ENCODE measurements at regions of chr9 and their contacts with region 1.

Region 1: GRCh38 chr9:133979273-133979920 is 12.7 kb downstream of the VAV2 start:
- DNase-seq: peak; percentile 80
- ATAC-seq: peak; percentile 81
- H3K4me3 ChIP-seq: peak overlapping the region; percentile 48 to 73 (median 48)
- H3K27ac ChIP-seq: peak overlapping the region; percentile 92
- H3K4me1 ChIP-seq: peaks cover 78% of the 10 kb centered on the region
- H3K27me3 ChIP-seq: no peaks in the 10 kb centered on the region
- CTCF ChIP-seq: peak; percentile 65
- EP300 ChIP-seq: peak in 1 of 2 experiments; percentile 46; a peak in 1 of 4 replicates
- POLR2A ChIP-seq: no peak
- RAD21 ChIP-seq: peak; percentile 20

Region 2: GRCh38 chr9:133892193-133892920 is 87.0 kb before region 1 on chr9:
- CTCF ChIA-PET with region 1: no interaction called
- POLR2A ChIA-PET with region 1: interaction called, 19 read pairs
- in situ Hi-C with region 1: no loop called
- intact Hi-C with region 1: loop called (anchors 1 kb)
- DNase-seq: peak; percentile 99
- ATAC-seq: peak; percentile 88
- H3K4me3 ChIP-seq: peak overlapping the region; percentile 3 to 54 (median 9); a peak in 4 of 6 replicates
- H3K27ac ChIP-seq: peak overlapping the region; percentile 96
- H3K4me1 ChIP-seq: peaks cover 89% of the 10 kb centered on the region
- H3K27me3 ChIP-seq: no peaks in the 10 kb centered on the region
- CTCF ChIP-seq: peak; percentile 37; the same call in 1 of the 2 replicates
- EP300 ChIP-seq: peak; percentile 91 to 96
- POLR2A ChIP-seq: peak in 1 of 2 experiments; percentile 82; a peak in 2 of 4 replicates
- RAD21 ChIP-seq: peak; percentile 82

Region 3: GRCh38 chr9:134088063-134088725 is 108.8 kb after region 1 on chr9:
- CTCF ChIA-PET with region 1: no interaction called
- POLR2A ChIA-PET with region 1: no interaction called
- in situ Hi-C with region 1: no loop called
- intact Hi-C with region 1: no loop called
- DNase-seq: no peak
- ATAC-seq: peak; percentile 54
- H3K4me3 ChIP-seq: no peak overlapping the region
- H3K27ac ChIP-seq: no peak overlapping the region
- H3K4me1 ChIP-seq: no peaks in the 10 kb centered on the region
- H3K27me3 ChIP-seq: peaks cover 5 to 29% of the 10 kb centered on the region in 2 experiments; a peak in 4 of 5 replicates
- CTCF ChIP-seq: no peak
- EP300 ChIP-seq: no peak
- POLR2A ChIP-seq: no peak
- RAD21 ChIP-seq: no peak